Natural killer cell (primary cell): ENCODE measurements at regions of chr12 and their contacts with region 1.

Region 1: GRCh38 chr12:810671-811415 is 58.5 kb downstream of the WNK1 start:
- DNase-seq: no peak
- ATAC-seq: no peak
- H3K4me3 ChIP-seq: no peak overlapping the region
- H3K4me3 Mint-ChIP-seq: no peak overlapping the region
- H3K27ac ChIP-seq: no peak overlapping the region
- H3K27ac Mint-ChIP-seq: peak overlapping the region in 1 of 2 donors; percentile 51
- H3K4me1 ChIP-seq: peaks cover 18% of the 10 kb centered on the region
- H3K4me1 Mint-ChIP-seq: peaks cover 46 to 58% of the 10 kb centered on the region in 2 donors
- H3K27me3 ChIP-seq: no peaks in the 10 kb centered on the region
- H3K27me3 Mint-ChIP-seq: no peaks in the 10 kb centered on the region
- CTCF ChIP-seq: no peak

Region 2: DNA sequence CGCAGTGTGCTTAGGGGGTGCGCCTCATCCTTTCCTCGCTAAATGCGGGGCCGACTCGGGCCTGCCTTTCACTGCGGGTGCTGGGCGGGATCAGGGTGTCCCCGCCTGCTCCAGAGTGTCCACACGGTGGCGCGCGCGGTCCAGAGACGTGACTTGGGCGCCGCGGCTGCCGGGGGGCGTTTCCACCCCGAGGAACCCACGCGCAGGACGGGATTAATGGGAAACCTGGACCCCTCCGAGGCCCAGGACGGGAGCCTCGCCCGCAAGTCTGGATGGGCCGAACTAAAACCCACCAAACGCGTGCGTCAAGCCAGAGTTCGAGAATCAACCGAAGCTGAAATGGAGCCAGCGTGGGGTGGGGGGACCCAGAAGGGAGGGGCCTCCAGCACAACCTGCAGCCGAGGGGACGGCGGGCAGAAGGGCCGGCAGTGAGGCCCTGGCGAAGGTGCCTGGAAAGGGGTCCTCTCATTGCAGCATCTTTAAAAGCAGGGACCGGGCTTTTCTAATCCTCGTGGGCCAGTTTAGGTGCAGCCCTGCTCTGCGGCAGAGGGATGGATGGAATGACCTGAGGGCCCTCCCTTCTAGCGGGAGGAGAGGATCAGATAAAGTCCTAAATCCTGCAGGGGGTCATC is 240.9 kb before region 1 on chr12:
- intact Hi-C with region 1: loop called (anchors 1 kb)
- DNase-seq: peak; percentile 85 to 91
- ATAC-seq: peak; percentile 95 to 97 (median 95)
- H3K4me3 ChIP-seq: peak overlapping the region; percentile 58
- H3K4me3 Mint-ChIP-seq: peak overlapping the region; percentile 93
- H3K27ac ChIP-seq: no peak overlapping the region
- H3K27ac Mint-ChIP-seq: peak overlapping the region; percentile 56 to 80
- H3K4me1 ChIP-seq: peaks cover 32% of the 10 kb centered on the region
- H3K4me1 Mint-ChIP-seq: peaks cover 32 to 51% of the 10 kb centered on the region in 2 donors
- H3K27me3 ChIP-seq: no peaks in the 10 kb centered on the region
- H3K27me3 Mint-ChIP-seq: no peaks in the 10 kb centered on the region
- CTCF ChIP-seq: peak; percentile 82

Region 3: DNA sequence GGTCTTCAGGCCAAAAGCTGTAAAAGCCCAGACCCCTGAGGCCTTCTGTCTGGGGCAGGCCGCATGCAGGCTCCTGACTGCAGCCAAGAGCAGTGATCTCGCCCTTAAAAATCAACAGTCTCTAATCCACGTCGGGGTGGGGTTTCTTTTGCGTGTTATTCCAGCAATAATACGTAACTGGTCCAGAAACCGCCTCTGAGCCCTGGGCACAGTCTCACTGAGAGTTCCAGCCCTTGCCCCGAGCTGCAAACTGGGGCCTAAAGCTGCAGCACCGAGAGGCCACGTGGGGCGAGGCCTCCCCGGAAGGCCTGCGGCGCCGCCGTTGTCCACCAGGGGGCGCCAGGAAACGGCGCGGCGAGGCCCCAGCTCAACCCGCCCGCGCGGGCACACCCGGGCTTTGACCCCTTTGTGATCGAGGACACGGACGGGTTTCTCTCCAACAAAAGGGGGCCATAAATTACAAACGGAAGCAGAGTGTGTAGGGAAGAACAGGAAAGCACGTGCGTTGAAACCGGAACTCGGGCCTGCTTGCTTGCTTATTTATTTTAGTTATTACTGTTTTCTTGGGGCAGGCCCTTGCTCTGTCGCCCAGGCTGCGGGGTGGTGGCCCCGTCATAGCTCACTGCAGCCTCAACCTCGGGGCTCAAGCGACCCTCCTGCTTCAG is 234.8 kb before region 1 on chr12:
- intact Hi-C with region 1: loop called (anchors 2 kb)
- DNase-seq: peak; percentile 88 to 90
- ATAC-seq: peak; percentile 96 to 100 (median 96)
- H3K4me3 ChIP-seq: peak overlapping the region; percentile 14
- H3K4me3 Mint-ChIP-seq: peak overlapping the region; percentile 80
- H3K27ac ChIP-seq: no peak overlapping the region
- H3K27ac Mint-ChIP-seq: peak overlapping the region in 1 of 2 donors; percentile 72
- H3K4me1 ChIP-seq: peaks cover 13% of the 10 kb centered on the region
- H3K4me1 Mint-ChIP-seq: peaks cover 6 to 19% of the 10 kb centered on the region in 2 donors
- H3K27me3 ChIP-seq: no peaks in the 10 kb centered on the region
- H3K27me3 Mint-ChIP-seq: peaks cover 0 to 6% of the 10 kb centered on the region in 2 donors
- CTCF ChIP-seq: peak; percentile 98

Region 4: GRCh38 chr12:614411-614970 is 196.4 kb before region 1 on chr12:
- intact Hi-C with region 1: loop called (anchors 1 kb)
- DNase-seq: peak in 1 of 2 donors; percentile 61
- ATAC-seq: no peak
- H3K4me3 ChIP-seq: no peak overlapping the region
- H3K4me3 Mint-ChIP-seq: peak overlapping the region; percentile 38
- H3K27ac ChIP-seq: no peak overlapping the region
- H3K27ac Mint-ChIP-seq: no peak overlapping the region
- H3K4me1 ChIP-seq: peaks cover 34% of the 10 kb centered on the region
- H3K4me1 Mint-ChIP-seq: peaks cover 35 to 44% of the 10 kb centered on the region in 2 donors
- H3K27me3 ChIP-seq: no peaks in the 10 kb centered on the region
- H3K27me3 Mint-ChIP-seq: no peaks in the 10 kb centered on the region
- CTCF ChIP-seq: no peak

Region 5: DNA sequence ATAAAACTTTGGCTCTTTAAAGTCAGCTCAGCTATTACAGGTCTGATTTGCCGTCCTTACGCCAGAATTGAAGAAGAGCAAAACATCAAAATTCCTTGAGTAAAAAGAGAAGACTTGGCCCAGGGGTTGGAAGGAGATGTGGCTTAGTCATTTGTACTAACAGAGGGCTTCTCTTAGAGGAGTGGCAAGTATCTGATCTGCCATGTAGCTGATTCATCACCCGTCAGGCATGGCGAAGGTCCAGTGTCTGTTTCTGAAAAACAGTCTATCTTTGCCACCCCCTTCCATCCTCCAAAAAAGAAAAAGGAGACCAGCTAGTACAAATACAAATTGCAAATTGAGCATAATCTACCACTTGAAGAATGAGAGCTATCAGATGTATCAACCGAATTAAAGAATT is 46.8 kb after region 1 on chr12:
- intact Hi-C with region 1: no loop called
- DNase-seq: no peak
- ATAC-seq: no peak
- H3K4me3 ChIP-seq: no peak overlapping the region
- H3K4me3 Mint-ChIP-seq: no peak overlapping the region
- H3K27ac ChIP-seq: no peak overlapping the region
- H3K27ac Mint-ChIP-seq: peak overlapping the region; percentile 43 to 55
- H3K4me1 ChIP-seq: peaks cover 3% of the 10 kb centered on the region
- H3K4me1 Mint-ChIP-seq: peaks cover 11 to 15% of the 10 kb centered on the region in 2 donors
- H3K27me3 ChIP-seq: no peaks in the 10 kb centered on the region
- H3K27me3 Mint-ChIP-seq: no peaks in the 10 kb centered on the region
- CTCF ChIP-seq: no peak

Region 6: GRCh38 chr12:1093166-1093751 is 282.4 kb after region 1 on chr12:
- intact Hi-C with region 1: loop called (anchors 10 kb)
- DNase-seq: peak in 1 of 2 donors; percentile 72
- ATAC-seq: peak in 2 of 3 donors; percentile 67 to 73
- H3K4me3 ChIP-seq: no peak overlapping the region
- H3K4me3 Mint-ChIP-seq: no peak overlapping the region
- H3K27ac ChIP-seq: no peak overlapping the region
- H3K27ac Mint-ChIP-seq: no peak overlapping the region
- H3K4me1 ChIP-seq: no peaks in the 10 kb centered on the region
- H3K4me1 Mint-ChIP-seq: peaks cover 2 to 4% of the 10 kb centered on the region in 2 donors
- H3K27me3 ChIP-seq: no peaks in the 10 kb centered on the region
- H3K27me3 Mint-ChIP-seq: no peaks in the 10 kb centered on the region
- CTCF ChIP-seq: peak; percentile 70